ENCODE measurements at regions of chr17 and their contacts with region 1.

Region 1: DNA sequence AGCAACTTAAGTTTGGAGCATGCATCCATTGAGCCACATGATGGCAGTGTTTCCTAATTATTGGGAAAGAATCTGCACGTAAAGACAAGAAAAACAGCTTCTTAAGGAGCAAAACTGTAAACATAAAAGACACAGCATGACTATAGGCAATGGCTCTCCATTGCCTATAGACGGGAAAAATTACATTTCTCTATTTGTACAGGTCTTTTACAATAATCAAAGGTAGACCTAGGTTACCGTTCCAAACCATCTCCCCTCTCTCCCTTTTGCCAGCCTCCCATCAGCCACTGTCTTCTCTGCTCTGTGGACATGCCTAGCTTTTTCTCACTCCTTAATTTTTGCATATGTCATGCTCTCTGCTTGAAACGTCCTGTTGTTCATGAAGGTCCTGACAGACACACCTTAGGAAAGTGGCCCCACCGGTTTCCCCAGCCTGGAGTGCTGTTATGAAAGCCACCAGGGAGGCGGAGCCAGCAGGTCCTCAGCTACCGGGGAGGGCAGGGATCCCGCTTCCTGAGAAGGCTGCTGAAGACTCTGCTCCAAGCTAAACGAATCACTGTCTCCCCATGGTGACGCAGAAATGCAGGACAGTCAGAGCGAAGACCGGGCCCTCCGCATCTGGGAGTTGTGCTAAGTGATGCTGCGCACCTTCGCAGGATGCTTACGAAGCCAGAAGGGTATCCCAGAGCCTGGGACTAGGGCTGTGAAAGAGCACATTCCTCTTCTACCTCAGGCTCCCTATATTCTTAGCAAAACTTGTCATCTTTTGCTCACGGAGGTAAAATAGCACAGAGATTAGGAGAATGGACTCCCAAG is 2.2 kb upstream of the SLC16A11 start:
- DNase-seq: no peak
- H3K4me3 ChIP-seq: peak overlapping the region in 3 of 4 donors; percentile 24 to 43 (median 43)
- H3K27ac ChIP-seq: peak overlapping the region; percentile 46 to 82 (median 78)
- H3K4me1 ChIP-seq: peaks cover 0 to 39% (median 33%) of the 10 kb centered on the region in 4 donors
- H3K27me3 ChIP-seq: peaks cover 15 to 36% (median 26%) of the 10 kb centered on the region in 3 donors
- CTCF ChIP-seq: peak; percentile 63 to 77 (median 70)
- EP300 ChIP-seq: no peak
- POLR2A ChIP-seq: no peak

Region 2: GRCh38 chr17:7136266-7136877 is 90.3 kb after region 1 on chr17:
- intact Hi-C with region 1: loop called (anchors 1 kb)
- DNase-seq: peak; percentile 80
- H3K4me3 ChIP-seq: no peak overlapping the region
- H3K27ac ChIP-seq: no peak overlapping the region
- H3K4me1 ChIP-seq: no peaks in the 10 kb centered on the region
- H3K27me3 ChIP-seq: peaks cover 3 to 66% (median 30%) of the 10 kb centered on the region in 3 donors
- CTCF ChIP-seq: peak; percentile 74 to 89 (median 84)
- EP300 ChIP-seq: no peak
- POLR2A ChIP-seq: no peak